Activated T-helper 1 cell treated with anti-CD3 and anti-CD28 coated beads, Interleukin-12 subunit alpha, Interleukin-12 subunit beta, Interleukin-2, Interleukin-4 antibody, amounts not matched to agents 30 ng/mL and 10 ng/mL and 1 ng/mL, durations not matched to agents 14 hours and 24 hours and 36 hours (primary cell): ENCODE measurements at regions of chr1 and their contacts with region 1.

Region 1: GRCh38 chr1:167936068-167936929 is at the start of gene DCAF6:
- DNase-seq: peak; percentile 98
- H3K4me3 Mint-ChIP-seq: peak within 1 kb of the TSS; percentile 91
- H3K27ac Mint-ChIP-seq: peak within 1 kb of the TSS; percentile 98
- H3K4me1 Mint-ChIP-seq: peaks cover 41% of the 10 kb centered on the region
- H3K27me3 Mint-ChIP-seq: no peaks in the 10 kb centered on the region
- total RNA-seq, gene DCAF6: 20.9 and 24.0 TPM in 2 replicates

Region 2: DNA sequence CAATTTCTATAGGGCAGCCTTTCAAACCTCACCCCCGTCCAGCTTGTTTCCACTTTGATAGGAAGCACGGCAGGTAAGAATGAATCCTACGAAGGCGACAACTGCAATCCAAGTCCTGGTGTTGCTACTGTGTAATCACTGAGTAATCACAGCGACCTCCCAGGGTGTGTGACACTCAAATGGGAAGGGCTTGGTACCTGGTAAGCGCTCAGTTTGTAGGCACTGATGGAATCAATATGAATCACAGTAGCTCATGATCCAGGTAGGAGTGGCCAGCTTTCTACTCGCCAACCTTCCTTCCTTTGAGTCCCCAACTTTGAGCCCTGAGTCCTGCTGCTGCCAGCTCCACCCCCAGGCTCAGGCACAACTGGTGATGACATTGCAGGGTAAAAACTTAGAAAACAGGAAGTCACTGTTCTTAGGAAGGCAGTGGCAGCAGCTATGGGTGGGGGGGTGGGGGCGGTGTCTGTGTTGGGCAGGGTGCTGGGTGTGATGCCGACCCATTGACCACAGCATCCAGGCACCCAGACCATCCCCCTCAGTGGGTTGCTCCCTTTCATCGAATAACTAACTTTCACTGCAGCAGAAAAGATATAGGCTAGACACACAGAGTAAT is 488.7 kb before region 1 on chr1:
- intact Hi-C with region 1: loop called (anchors 5 kb)
- DNase-seq: peak; percentile 70
- H3K4me3 Mint-ChIP-seq: peak overlapping the region; percentile 68
- H3K27ac Mint-ChIP-seq: peak overlapping the region; percentile 90
- H3K4me1 Mint-ChIP-seq: peaks cover 77% of the 10 kb centered on the region
- H3K27me3 Mint-ChIP-seq: no peaks in the 10 kb centered on the region

Region 3: DNA sequence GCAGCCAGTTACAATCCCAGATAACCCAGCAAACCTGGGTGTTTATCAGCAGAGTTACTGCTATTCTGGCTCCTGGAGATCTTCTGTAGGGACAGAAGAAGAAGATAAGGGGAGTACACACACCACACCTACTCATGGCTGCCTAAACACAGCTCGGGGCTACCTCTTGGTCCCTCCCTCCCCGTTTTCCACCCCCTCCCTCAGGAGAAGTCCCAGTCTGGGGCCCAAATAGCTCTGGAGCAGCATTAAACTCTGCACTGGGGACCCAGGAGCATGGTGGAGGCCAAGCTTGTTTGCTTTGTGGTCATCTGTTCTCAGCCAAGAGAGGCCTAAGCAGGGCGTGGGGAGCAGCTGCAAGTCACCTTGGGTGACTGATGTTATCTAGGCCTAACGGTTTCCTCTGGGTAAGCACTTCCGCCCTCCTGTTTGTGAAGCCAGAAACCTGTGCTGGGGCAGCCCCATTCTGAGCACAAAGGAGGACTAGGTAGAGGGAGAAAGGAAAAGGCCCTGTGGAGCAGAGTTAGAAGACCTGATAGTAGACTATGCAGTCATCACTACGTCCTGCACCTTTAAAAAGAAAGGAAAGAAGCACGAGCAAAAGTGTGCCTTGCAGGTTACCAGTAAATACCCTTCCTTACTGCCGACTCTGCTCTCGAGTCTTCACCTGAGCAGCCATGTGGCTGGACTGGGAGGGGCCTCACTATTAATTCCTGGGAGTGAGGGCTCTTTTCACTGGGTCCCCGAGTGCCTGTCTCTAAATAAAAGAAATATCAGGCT is 308.2 kb before region 1 on chr1:
- intact Hi-C with region 1: loop called (anchors 5 kb)
- DNase-seq: peak; percentile 82
- H3K4me3 Mint-ChIP-seq: peak overlapping the region; percentile 85
- H3K27ac Mint-ChIP-seq: peak overlapping the region; percentile 89
- H3K4me1 Mint-ChIP-seq: peaks cover 70% of the 10 kb centered on the region
- H3K27me3 Mint-ChIP-seq: no peaks in the 10 kb centered on the region

Region 4: GRCh38 chr1:167803358-167804207 is 132.7 kb before region 1 on chr1:
- intact Hi-C with region 1: loop called (anchors 1 kb)
- DNase-seq: peak; percentile 84
- H3K4me3 Mint-ChIP-seq: peak overlapping the region; percentile 58
- H3K27ac Mint-ChIP-seq: peak overlapping the region; percentile 87
- H3K4me1 Mint-ChIP-seq: peaks cover 41% of the 10 kb centered on the region
- H3K27me3 Mint-ChIP-seq: no peaks in the 10 kb centered on the region

Region 5: DNA sequence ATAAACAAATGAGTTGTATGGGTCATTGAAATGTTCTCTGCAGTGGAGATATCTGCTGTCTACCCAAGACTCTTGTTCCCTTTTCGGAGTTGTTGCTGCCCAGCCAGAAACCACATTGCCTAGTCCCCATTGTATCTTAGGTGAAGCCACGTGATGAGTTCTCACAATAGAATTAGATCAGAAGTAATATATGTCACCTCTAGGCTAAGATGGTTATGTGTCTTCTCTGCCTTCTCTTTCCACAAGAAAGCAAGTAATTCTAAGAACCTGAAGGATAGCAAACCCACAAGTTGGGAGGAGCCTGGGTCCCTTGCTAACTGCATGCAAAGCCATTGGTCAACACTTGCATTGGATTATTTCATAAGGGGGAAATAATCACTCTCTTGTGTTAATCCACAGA is 99.0 kb before region 1 on chr1:
- intact Hi-C with region 1: no loop called
- DNase-seq: no peak
- H3K4me3 Mint-ChIP-seq: no peak overlapping the region
- H3K27ac Mint-ChIP-seq: no peak overlapping the region
- H3K4me1 Mint-ChIP-seq: no peaks in the 10 kb centered on the region
- H3K27me3 Mint-ChIP-seq: peaks cover 5% of the 10 kb centered on the region

Region 6: GRCh38 chr1:168136709-168137514 is 200.6 kb after region 1 on chr1 and contains the start of gene GPR161:
- intact Hi-C with region 1: loop called (anchors 5 kb)
- DNase-seq: no peak
- H3K4me3 Mint-ChIP-seq: peak within 1 kb of the TSS; percentile 85
- H3K27ac Mint-ChIP-seq: peak within 1 kb of the TSS; percentile 71
- H3K4me1 Mint-ChIP-seq: peaks cover 26% of the 10 kb centered on the region
- H3K27me3 Mint-ChIP-seq: peaks cover 53% of the 10 kb centered on the region
- total RNA-seq, gene GPR161: 0.41 and 0.42 TPM in 2 replicates

Region 7: GRCh38 chr1:168225476-168226190 is 289.3 kb after region 1 on chr1 and contains the start of gene SFT2D2:
- intact Hi-C with region 1: loop called (anchors 2 kb)
- DNase-seq: peak; percentile 77
- H3K4me3 Mint-ChIP-seq: peak within 1 kb of the TSS; percentile 90
- H3K27ac Mint-ChIP-seq: peak within 1 kb of the TSS; percentile 87
- H3K4me1 Mint-ChIP-seq: peaks cover 61% of the 10 kb centered on the region
- H3K27me3 Mint-ChIP-seq: peaks cover 4% of the 10 kb centered on the region
- total RNA-seq, gene SFT2D2: 71.1 and 76.5 TPM in 2 replicates